ENCODE measurements at regions of chr7 and their contacts with region 1.

Region 1: GRCh38 chr7:101363734-101364374 is 1.2 kb downstream of the COL26A1 start:
- DNase-seq: peak; percentile 70 to 84
- ATAC-seq: peak; percentile 87 to 96
- H3K4me3 ChIP-seq: peak overlapping the region; percentile 53
- H3K27ac ChIP-seq: peak overlapping the region; percentile 75 to 85
- H3K4me1 ChIP-seq: no peaks in the 10 kb centered on the region
- CTCF ChIP-seq: peak; percentile 94
- EP300 ChIP-seq: no peak
- POLR2A ChIP-seq: no peak
- RAD21 ChIP-seq: peak; percentile 70 to 81

Region 2: GRCh38 chr7:101321491-101322401 is 42.1 kb before region 1 on chr7 and contains the start of gene IFT22:
- CTCF ChIA-PET with region 1: interaction called, 12 read pairs
- POLR2A ChIA-PET with region 1: interaction called, 6 read pairs
- DNase-seq: peak; percentile 86 to 88
- ATAC-seq: peak; percentile 98 to 99
- H3K4me3 ChIP-seq: peak within 1 kb of the TSS; percentile 77
- H3K27ac ChIP-seq: peak within 1 kb of the TSS; percentile 94 to 95
- H3K4me1 ChIP-seq: peaks cover 6% of the 10 kb centered on the region; the same call in 1 of the 3 replicates
- CTCF ChIP-seq: peak; percentile 65
- EP300 ChIP-seq: no peak
- POLR2A ChIP-seq: peak; percentile 63
- RAD21 ChIP-seq: peak; percentile 69
- polyA plus RNA-seq, gene IFT22: 58.4 and 66.5 TPM in 2 replicates

Region 3: DNA sequence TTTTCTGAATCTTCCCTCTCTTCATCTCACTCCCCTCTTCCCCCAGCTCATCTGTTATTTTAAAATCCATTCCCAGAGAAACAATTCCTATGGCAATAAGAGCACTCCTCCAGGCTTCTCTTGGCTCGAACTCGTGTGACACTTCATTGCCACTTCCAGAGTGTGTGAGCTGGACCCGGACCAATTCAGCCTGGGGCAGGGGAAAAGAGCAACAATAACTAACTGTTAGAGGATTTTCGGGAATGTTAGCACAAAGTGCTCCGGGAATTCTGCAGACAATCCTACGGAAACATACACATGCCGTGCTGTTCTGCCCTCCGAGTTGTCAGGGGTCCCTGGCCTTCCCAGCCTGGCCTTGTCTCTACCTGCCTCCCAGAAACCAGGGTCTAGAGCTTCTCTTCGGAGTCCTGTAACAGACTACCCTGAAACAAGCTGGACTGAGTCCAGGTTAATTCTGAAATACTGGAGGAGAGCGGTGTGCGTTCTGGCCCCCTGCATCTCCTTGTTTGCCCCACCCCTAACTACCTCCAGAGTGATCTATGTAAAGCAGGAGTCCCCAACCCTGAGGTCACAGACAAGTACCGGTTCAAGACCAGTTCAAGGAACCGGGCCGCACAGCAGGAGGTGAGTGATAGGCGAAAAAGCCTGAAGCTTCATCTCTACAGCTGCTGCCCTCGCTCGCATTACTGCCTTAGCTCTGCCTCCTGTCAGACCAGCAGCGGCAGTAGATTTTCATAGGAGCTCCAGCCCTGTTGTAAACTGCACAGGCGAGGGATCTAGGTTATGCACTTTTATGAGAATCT is 10.2 kb after region 1 on chr7:
- CTCF ChIA-PET with region 1: interaction called, 38 read pairs
- POLR2A ChIA-PET with region 1: interaction called, 5 read pairs
- DNase-seq: no peak
- ATAC-seq: no peak
- H3K4me3 ChIP-seq: no peak overlapping the region
- H3K27ac ChIP-seq: no peak overlapping the region
- H3K4me1 ChIP-seq: peaks cover 11% of the 10 kb centered on the region; the same call in 1 of the 3 replicates
- CTCF ChIP-seq: no peak
- EP300 ChIP-seq: no peak
- POLR2A ChIP-seq: no peak
- RAD21 ChIP-seq: no peak

Region 4: GRCh38 chr7:101390901-101391301 is 27.0 kb after region 1 on chr7:
- CTCF ChIA-PET with region 1: interaction called, 18 read pairs
- POLR2A ChIA-PET with region 1: no interaction called
- DNase-seq: no peak
- ATAC-seq: no peak
- H3K4me3 ChIP-seq: no peak overlapping the region
- H3K27ac ChIP-seq: no peak overlapping the region
- H3K4me1 ChIP-seq: no peaks in the 10 kb centered on the region
- CTCF ChIP-seq: no peak
- EP300 ChIP-seq: no peak
- POLR2A ChIP-seq: no peak
- RAD21 ChIP-seq: no peak

Region 5: DNA sequence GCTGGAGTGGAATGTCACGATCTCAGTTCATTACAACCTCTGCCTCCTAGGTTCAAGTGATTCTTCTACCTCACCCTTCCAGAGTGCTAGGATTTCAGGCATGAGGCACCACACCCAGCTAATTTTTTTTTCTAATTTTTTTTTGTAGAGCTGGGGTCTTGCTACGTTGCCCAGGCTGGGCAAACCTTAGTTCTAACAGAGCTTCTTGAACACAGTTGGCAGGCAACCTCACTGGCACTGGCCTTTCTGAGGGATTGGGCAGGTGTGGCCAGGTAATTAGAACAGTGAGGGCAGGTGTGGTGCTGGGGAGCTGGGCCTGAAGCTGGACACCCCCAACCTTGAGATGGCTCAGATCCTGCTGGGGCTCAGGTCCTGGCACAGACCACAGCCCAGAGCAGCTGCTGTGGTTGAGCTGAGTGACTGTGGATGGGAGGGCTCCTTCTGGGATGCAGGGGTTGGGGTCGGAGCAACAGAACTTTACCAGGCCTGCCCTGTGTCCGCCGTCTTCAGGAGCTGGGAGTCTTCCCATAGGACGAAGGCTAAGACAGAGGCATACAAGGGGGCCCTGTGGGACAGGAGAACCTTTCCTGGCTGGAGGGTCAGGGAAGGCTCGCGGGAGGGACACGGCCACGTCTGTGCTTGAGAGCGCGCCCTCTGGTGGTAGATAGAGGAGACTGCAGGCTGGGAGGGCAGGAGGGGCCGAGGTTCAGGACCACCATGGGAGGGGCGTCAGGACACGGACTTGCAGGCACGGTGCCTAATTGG is 47.1 kb after region 1 on chr7:
- CTCF ChIA-PET with region 1: interaction called, 26 read pairs
- POLR2A ChIA-PET with region 1: no interaction called
- DNase-seq: peak; percentile 51 to 61
- ATAC-seq: peak; percentile 40 to 85; a peak in 3 of 6 replicates
- H3K4me3 ChIP-seq: no peak overlapping the region
- H3K27ac ChIP-seq: no peak overlapping the region
- H3K4me1 ChIP-seq: no peaks in the 10 kb centered on the region
- CTCF ChIP-seq: peak; percentile 56
- EP300 ChIP-seq: no peak
- POLR2A ChIP-seq: no peak
- RAD21 ChIP-seq: peak; percentile 48 to 55

Region 6: GRCh38 chr7:101436857-101437576 is 73.2 kb after region 1 on chr7:
- CTCF ChIA-PET with region 1: interaction called, 32 read pairs
- POLR2A ChIA-PET with region 1: interaction called, 3 read pairs
- DNase-seq: peak; percentile 34 to 41
- ATAC-seq: peak; percentile 36 to 63; a peak in 4 of 6 replicates
- H3K4me3 ChIP-seq: no peak overlapping the region
- H3K27ac ChIP-seq: no peak overlapping the region
- H3K4me1 ChIP-seq: no peaks in the 10 kb centered on the region
- CTCF ChIP-seq: no peak
- EP300 ChIP-seq: no peak
- POLR2A ChIP-seq: no peak
- RAD21 ChIP-seq: no peak

Region 7: GRCh38 chr7:101507791-101508252 is 144.0 kb after region 1 on chr7:
- CTCF ChIA-PET with region 1: interaction called, 27 read pairs
- POLR2A ChIA-PET with region 1: no interaction called
- DNase-seq: peak; percentile 70 to 84
- ATAC-seq: peak; percentile 76 to 84; a peak in 5 of 6 replicates
- H3K4me3 ChIP-seq: no peak overlapping the region
- H3K27ac ChIP-seq: no peak overlapping the region
- H3K4me1 ChIP-seq: no peaks in the 10 kb centered on the region
- CTCF ChIP-seq: peak; percentile 99
- EP300 ChIP-seq: no peak
- POLR2A ChIP-seq: no peak
- RAD21 ChIP-seq: peak; percentile 90 to 95

Region 8: DNA sequence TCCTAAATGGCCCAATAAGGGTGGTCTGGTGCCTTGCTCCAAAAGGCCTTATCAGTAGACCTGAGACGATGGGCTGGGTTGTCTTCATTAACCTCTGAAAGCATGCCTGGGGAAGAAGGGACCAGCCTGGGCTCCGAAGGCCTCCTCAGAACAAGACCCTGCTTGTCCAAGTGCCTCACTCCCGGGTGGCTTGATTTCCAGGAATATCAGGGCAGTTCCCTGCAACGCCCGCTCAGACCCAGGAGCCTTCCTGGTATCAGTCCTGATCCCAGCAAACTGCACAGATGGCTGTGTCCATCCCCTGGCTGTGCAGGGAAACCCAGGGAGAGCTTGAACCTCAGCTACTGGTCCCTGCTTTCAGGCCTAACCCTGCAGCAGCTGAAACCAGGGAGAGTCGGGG is 403.7 kb after region 1 on chr7:
- CTCF ChIA-PET with region 1: no interaction called
- POLR2A ChIA-PET with region 1: no interaction called
- DNase-seq: no peak
- ATAC-seq: peak in 1 of 2 experiments; percentile 38; a peak in 3 of 6 replicates
- H3K4me3 ChIP-seq: no peak overlapping the region
- H3K27ac ChIP-seq: no peak overlapping the region
- H3K4me1 ChIP-seq: no peaks in the 10 kb centered on the region
- CTCF ChIP-seq: no peak
- EP300 ChIP-seq: no peak
- POLR2A ChIP-seq: no peak
- RAD21 ChIP-seq: no peak

Measured in A549 (cell line).